OCI-LY7 (cell line): ENCODE measurements at regions of chr12 and their contacts with region 1.

Region 1: GRCh38 chr12:48995061-48995879 is 3.9 kb downstream of the DDN start:
- DNase-seq: peak; percentile 61
- H3K4me3 ChIP-seq: peak overlapping the region; percentile 24
- H3K27ac ChIP-seq: no peak overlapping the region
- H3K4me1 ChIP-seq: peaks cover 30% of the 10 kb centered on the region
- CTCF ChIP-seq: peak; percentile 88

Region 2: GRCh38 chr12:48903982-48904411 is 91.3 kb before region 1 on chr12:
- CTCF ChIA-PET with region 1: no interaction called
- POLR2A ChIA-PET with region 1: no interaction called
- intact Hi-C with region 1: no loop called
- DNase-seq: peak; percentile 79
- H3K4me3 ChIP-seq: peak overlapping the region; percentile 56
- H3K27ac ChIP-seq: no peak overlapping the region
- H3K4me1 ChIP-seq: no peaks in the 10 kb centered on the region
- CTCF ChIP-seq: peak; percentile 75

Region 3: GRCh38 chr12:48969833-48970701 is 25.2 kb before region 1 on chr12:
- CTCF ChIA-PET with region 1: no interaction called
- POLR2A ChIA-PET with region 1: no interaction called
- intact Hi-C with region 1: no loop called
- DNase-seq: no peak
- H3K4me3 ChIP-seq: no peak overlapping the region
- H3K27ac ChIP-seq: no peak overlapping the region
- H3K4me1 ChIP-seq: no peaks in the 10 kb centered on the region
- CTCF ChIP-seq: no peak

Region 4: DNA sequence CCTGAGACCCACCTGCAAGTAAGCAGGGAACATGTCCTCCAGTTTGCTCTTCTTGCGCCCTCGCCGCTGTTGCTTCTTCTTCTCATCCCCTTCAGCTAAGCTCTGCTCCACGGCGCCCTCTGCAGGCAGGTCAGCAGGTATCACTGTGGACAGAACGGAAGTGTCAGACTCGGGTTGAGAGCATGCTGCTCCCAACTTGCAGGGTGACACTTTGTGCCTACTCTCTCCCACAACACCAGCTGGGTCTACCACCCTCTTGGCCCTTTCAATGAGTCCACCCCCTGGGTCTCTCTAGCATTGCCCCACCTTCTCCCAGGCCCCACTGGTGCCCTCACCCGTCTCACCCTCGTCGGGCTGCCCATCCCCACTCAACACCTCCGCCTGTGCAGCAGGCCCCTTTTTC is 48.6 kb after region 1 on chr12:
- CTCF ChIA-PET with region 1: interaction called, 6 read pairs
- POLR2A ChIA-PET with region 1: no interaction called
- intact Hi-C with region 1: loop called (anchors 1 kb)
- DNase-seq: peak; percentile 70
- H3K4me3 ChIP-seq: no peak overlapping the region
- H3K27ac ChIP-seq: no peak overlapping the region
- H3K4me1 ChIP-seq: no peaks in the 10 kb centered on the region
- CTCF ChIP-seq: peak; percentile 89

Region 5: DNA sequence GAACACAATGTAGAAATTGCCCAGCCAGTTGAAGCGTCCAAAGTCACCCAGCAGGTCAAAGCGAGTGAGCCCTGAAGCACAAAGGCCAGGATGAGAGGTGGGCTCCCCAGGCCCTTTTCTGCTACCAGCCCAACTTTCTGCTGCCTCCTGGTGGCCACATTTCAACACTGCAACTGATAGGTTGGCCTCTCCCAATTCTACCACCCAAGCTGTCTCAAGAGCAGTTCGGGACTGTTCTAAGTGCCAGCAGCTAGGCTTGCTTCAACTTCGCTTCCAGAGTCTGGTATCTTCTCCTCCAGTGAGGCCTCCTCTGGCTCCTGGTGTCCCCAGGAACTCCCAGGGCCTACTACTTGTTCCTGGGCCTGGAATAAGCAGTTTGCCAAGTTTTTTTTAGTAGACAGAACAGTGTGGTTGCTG is 102.8 kb after region 1 on chr12:
- CTCF ChIA-PET with region 1: no interaction called
- POLR2A ChIA-PET with region 1: no interaction called
- intact Hi-C with region 1: loop called (anchors 5 kb)
- DNase-seq: peak; percentile 58
- H3K4me3 ChIP-seq: no peak overlapping the region
- H3K27ac ChIP-seq: no peak overlapping the region
- H3K4me1 ChIP-seq: no peaks in the 10 kb centered on the region
- CTCF ChIP-seq: peak; percentile 87